PC-3 (cell line): ENCODE measurements at regions of chrX and their contacts with region 1.

Region 1: DNA sequence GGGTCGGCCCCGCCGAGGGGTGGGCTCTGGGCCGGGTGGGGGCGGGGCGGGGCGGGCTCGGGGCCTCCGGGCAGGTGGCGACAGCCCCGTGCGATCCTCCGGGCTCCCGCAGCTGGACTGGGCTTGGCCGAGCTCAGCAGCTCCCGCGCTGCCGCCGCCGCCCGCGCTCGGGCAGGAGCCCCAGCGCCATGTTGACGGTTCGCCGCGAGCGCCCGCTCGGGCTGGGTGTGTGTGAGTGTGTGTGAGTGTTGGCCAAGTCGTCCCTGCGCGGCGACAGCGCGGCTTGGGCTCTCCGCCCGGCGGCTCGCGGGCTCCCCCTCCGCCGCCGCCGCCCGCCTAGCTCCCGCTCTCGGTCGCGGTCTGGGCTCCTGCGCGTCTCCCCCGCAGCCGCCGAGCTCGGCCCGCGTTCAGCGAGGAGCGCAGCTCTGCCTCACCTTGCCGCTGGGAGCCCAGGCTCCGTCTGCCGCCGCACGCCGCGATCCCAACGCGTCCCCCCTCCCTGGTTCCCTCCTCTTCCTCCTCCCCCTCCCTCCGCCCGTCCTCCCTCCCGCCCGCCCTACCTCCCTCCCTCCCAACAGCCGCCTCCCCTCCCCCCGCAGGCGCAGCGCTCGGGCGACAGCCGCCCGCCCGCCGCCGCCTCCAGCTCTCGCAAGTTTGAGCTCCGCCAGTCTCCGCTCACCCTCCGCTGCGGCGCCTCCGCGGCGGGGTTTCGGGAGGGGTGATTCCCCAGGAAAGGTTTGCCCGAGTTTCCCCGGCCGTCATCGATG is at the start of gene BCOR:
- DNase-seq: peak; percentile 62
- ATAC-seq: peak; percentile 19
- H3K4me3 ChIP-seq: peak within 1 kb of the TSS; percentile 92
- H3K27ac ChIP-seq: no peak within 1 kb of the TSS
- H3K4me1 ChIP-seq: peaks cover 34% of the 10 kb centered on the region
- H3K27me3 ChIP-seq: no peaks in the 10 kb centered on the region
- CTCF ChIP-seq: no peak
- total RNA-seq, gene BCOR: 21.8 and 41.9 TPM in 2 replicates

Region 2: GRCh38 chrX:39896951-39897740 is 200.5 kb before region 1 on chrX:
- CTCF ChIA-PET with region 1: no interaction called
- POLR2A ChIA-PET with region 1: no interaction called
- intact Hi-C with region 1: loop called (anchors 5 kb)
- DNase-seq: peak; percentile 72
- ATAC-seq: peak; percentile 31
- H3K4me3 ChIP-seq: no peak overlapping the region; the same call in 1 of the 2 replicates
- H3K27ac ChIP-seq: peak overlapping the region; percentile 90
- H3K4me1 ChIP-seq: peaks cover 52% of the 10 kb centered on the region
- H3K27me3 ChIP-seq: no peaks in the 10 kb centered on the region
- CTCF ChIP-seq: no peak

Region 3: DNA sequence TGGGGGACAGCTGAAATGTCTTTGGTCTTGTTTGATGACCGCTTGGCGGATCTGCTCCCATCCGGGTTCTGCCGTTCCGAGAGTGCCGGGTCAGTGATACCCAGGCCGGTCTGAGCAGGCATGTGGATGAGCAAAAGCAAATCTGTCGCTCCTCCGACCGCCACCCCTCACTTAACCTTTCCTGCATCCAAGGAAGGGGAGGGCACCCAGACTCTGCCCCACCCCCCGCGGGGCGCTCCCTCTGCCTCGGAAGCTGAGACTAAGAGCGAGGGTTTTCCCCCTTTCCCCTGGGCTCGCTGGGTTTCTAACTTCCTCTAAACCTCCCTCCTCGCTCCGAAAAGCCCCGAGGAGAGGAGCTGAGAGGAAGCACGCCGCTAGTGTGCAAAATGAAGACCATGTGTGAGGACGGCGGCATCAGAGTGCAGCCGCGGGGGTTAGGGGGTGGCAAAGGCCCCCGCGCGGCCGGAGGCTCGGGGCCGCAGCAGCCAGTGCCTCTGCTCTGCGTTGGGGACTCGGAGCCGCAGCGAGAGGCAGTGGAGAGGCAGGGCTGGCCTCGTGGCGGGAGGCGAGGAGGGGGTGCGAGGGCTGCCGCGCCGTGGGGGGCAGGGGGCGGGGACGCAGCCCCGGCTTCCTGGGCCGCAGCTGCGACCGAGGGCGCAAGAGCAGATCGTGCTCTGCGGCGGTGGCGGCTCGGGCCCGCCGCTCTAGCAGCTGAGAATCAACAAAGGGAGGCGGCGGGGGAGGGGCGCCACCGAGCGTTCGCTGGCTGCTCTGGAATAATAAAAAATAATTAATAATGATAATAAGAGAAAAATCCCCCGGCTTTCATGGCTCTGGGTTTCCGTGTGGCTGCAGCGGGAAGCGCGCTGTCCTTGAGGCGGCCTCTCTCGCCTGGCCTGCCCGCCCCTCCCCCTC is 55.9 kb after region 1 on chrX:
- CTCF ChIA-PET with region 1: interaction called, 7 read pairs
- POLR2A ChIA-PET with region 1: interaction called, 3 read pairs
- intact Hi-C with region 1: loop called (anchors 5 kb)
- DNase-seq: peak; percentile 36
- ATAC-seq: peak; percentile 2; the same call in 1 of the 2 replicates
- H3K4me3 ChIP-seq: peak overlapping the region; percentile 84
- H3K27ac ChIP-seq: no peak overlapping the region
- H3K4me1 ChIP-seq: peaks cover 32% of the 10 kb centered on the region
- H3K27me3 ChIP-seq: no peaks in the 10 kb centered on the region
- CTCF ChIP-seq: 0 out of 2 replicates have a peak, but pooled peaks have one; percentile 8